Endothelial cell of umbilical vein (primary cell): ENCODE measurements at regions of chr4 and their contacts with region 1.

Region 1: GRCh38 chr4:137531986-137532868 is at the start of gene PCDH18:
- DNase-seq: peak; percentile 90
- H3K4me3 ChIP-seq: peak within 1 kb of the TSS; percentile 38 to 94 (median 58)
- H3K27ac ChIP-seq: peak within 1 kb of the TSS; percentile 23
- H3K4me1 ChIP-seq: peaks cover 10% of the 10 kb centered on the region
- H3K27me3 ChIP-seq: no peaks in the 10 kb centered on the region
- CTCF ChIP-seq: no peak
- POLR2A ChIP-seq: no peak
- total RNA-seq, gene PCDH18: 1.4 and 1.5 TPM in 2 replicates

Region 2: GRCh38 chr4:137519406-137519805 is 12.8 kb before region 1 on chr4:
- CTCF ChIA-PET with region 1: interaction called, 11 read pairs
- POLR2A ChIA-PET with region 1: interaction called, 6 read pairs
- dilution Hi-C with region 1: no loop called
- intact Hi-C with region 1: loop called (anchors 2 kb)
- DNase-seq: peak; percentile 89
- H3K4me3 ChIP-seq: peak overlapping the region in 1 of 3 experiments; percentile 31
- H3K27ac ChIP-seq: peak overlapping the region; percentile 38
- H3K4me1 ChIP-seq: peaks cover 11% of the 10 kb centered on the region
- H3K27me3 ChIP-seq: no peaks in the 10 kb centered on the region
- CTCF ChIP-seq: no peak
- POLR2A ChIP-seq: no peak

Region 3: DNA sequence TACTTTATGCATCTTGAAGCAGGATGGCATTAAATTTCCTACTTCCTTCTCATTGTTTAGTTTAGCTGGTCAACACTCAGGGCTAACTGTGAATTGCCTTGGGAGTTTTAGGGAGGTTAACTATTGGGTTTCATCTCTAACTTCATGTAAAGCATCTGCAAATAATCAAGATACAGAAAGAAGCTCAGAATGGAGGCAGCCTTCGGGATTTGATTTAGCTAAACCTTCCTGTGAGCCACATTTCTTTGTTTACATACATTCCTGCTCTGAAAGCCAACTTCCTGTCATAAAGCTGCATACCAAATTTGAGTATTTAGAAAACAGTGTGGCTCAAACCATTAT is 131.8 kb after region 1 on chr4:
- CTCF ChIA-PET with region 1: no interaction called
- POLR2A ChIA-PET with region 1: no interaction called
- dilution Hi-C with region 1: no loop called
- intact Hi-C with region 1: loop called (anchors 5 kb)
- DNase-seq: peak; percentile 62
- H3K4me3 ChIP-seq: peak overlapping the region in 1 of 3 experiments; percentile 11
- H3K27ac ChIP-seq: peak overlapping the region; percentile 3
- H3K4me1 ChIP-seq: peaks cover 11% of the 10 kb centered on the region
- H3K27me3 ChIP-seq: no peaks in the 10 kb centered on the region
- CTCF ChIP-seq: no peak
- POLR2A ChIP-seq: no peak

Region 4: GRCh38 chr4:137861682-137862081 is 329.5 kb after region 1 on chr4:
- CTCF ChIA-PET with region 1: no interaction called
- POLR2A ChIA-PET with region 1: no interaction called
- dilution Hi-C with region 1: no loop called
- intact Hi-C with region 1: loop called (anchors 10 kb)
- DNase-seq: peak; percentile 32
- H3K4me3 ChIP-seq: no peak overlapping the region
- H3K27ac ChIP-seq: no peak overlapping the region
- H3K4me1 ChIP-seq: no peaks in the 10 kb centered on the region
- H3K27me3 ChIP-seq: no peaks in the 10 kb centered on the region
- CTCF ChIP-seq: peak; percentile 11 to 18
- POLR2A ChIP-seq: no peak